Left ventricle myocardium inferior (tissue), 1 donor: ENCODE measurements at regions of chr11 and their contacts with region 1.

Region 1: GRCh38 chr11:125170510-125171031 is 6.0 kb downstream of the PKNOX2 start:
- DNase-seq: peak; percentile 80
- H3K4me3 ChIP-seq: peak overlapping the region; percentile 42
- H3K27ac ChIP-seq: peak overlapping the region; percentile 87
- H3K4me1 ChIP-seq: peaks cover 62% of the 10 kb centered on the region
- H3K27me3 ChIP-seq: peaks cover 35% of the 10 kb centered on the region
- CTCF ChIP-seq: no peak

Region 2: DNA sequence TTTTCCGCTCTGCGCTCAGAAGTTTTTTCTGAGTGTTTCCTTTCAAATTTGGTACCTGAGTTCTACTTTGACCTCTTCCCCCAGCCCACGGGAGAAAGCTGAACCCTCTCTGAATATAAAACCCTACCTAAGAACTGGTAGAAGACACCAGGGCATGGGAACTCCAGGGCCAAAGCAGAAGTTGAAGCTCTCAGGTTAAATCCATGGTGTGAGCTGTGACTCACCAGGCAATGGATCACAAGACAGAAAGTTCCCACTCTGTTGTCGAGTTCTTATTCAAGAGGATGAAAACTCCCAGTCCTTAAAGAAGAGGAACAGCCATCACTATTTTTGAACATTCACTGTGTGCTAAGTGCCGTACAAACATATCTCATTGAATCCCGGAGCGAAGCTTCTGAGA is 68.1 kb before region 1 on chr11:
- intact Hi-C with region 1: no loop called
- DNase-seq: no peak
- H3K4me3 ChIP-seq: no peak overlapping the region
- H3K27ac ChIP-seq: no peak overlapping the region
- H3K4me1 ChIP-seq: no peaks in the 10 kb centered on the region
- H3K27me3 ChIP-seq: no peaks in the 10 kb centered on the region
- CTCF ChIP-seq: no peak

Region 3: DNA sequence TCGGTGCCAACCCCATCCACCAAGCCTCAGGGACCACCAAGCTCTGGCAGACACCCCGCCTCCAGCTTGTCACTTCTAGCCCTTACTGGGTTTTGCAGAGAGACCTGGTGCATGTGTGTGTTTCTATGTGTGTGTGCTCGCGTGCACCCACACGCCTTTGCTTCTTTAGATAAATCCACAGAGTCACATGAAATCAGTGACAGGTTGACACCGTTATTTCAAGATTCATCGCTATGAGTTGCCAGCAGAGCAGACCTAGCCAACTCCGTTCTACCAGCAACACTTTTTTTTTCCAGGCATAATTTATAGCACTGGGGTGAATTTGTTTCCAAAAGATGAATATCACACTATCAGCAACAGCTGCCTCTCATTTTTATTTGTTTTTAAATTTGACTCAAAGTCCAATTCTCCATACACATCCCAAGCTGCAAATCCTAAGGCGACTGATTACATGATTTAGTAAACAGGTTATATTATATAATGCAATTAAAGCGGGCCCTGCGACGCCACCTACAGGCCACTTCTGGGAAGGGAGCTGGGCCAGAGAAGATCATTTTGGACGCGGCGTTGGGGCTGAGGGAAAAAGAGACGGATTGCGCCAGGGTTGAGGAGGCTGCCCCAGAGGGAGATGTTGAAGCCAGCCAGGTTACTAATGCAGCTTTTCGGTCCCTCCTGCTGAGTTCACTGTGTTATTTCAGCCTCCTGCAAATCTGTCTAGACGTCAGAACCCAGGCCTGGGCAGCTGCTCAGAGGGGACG is 175.0 kb after region 1 on chr11:
- intact Hi-C with region 1: loop called (anchors 10 kb)
- DNase-seq: peak; percentile 83
- H3K4me3 ChIP-seq: no peak overlapping the region
- H3K27ac ChIP-seq: peak overlapping the region; percentile 62
- H3K4me1 ChIP-seq: peaks cover 39% of the 10 kb centered on the region
- H3K27me3 ChIP-seq: no peaks in the 10 kb centered on the region
- CTCF ChIP-seq: peak; percentile 88

Region 4: DNA sequence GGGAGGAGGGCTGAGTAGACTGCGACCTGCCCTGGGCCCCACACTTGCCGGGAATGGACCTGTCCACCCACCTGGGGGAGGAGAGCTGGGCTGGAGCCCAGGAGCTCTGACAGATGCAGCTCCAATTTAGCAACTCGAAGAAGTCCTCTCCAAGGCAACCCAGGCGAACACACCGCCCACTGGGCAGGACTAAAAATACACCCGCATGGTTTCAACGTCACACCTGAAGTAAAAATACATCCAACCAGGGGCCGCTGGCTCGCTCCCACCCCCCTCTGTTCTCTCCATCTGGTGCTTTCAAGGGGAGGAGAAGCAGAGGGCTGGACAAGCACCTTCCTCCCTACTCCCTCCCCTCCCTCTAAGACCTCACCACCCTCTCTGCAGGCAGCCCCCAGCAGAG is 205.5 kb after region 1 on chr11:
- intact Hi-C with region 1: no loop called
- DNase-seq: peak; percentile 78
- H3K4me3 ChIP-seq: no peak overlapping the region
- H3K27ac ChIP-seq: peak overlapping the region; percentile 74
- H3K4me1 ChIP-seq: peaks cover 59% of the 10 kb centered on the region
- H3K27me3 ChIP-seq: no peaks in the 10 kb centered on the region
- CTCF ChIP-seq: no peak

Region 5: DNA sequence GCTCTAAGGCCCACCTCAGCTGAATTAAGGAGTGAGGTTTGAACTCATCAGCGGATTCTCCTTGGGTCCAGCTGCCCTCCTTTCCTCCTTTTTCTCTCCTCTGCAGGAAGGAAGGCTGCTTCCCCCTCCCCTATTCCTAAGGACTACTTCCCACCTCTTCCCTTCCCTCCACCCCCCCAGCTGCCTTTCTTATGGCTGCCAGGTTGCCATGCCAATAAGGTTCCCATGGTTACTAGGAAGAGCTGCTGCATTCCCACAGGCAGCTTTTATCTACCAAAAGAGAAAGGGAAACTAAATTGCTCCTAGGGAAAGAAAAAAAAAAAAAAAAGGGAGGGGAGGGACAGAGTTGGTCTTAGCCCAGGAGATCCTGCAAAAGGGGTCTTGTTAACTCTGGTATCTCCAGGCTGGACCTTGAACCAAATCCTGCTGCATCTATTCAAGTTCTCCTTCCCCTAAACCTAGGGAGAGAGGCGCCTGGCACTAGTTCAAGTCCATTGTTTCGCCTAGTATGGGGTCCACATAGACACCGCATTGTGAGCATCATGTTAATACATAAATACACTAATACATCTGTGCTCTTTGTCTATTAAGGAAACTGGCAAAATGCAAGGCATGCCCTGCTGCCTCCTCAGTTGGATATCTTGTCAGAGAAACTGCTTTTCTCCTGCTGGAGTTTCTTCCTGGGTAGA is 346.7 kb after region 1 on chr11:
- intact Hi-C with region 1: no loop called
- DNase-seq: no peak
- H3K4me3 ChIP-seq: peak overlapping the region; percentile 39
- H3K27ac ChIP-seq: no peak overlapping the region
- H3K4me1 ChIP-seq: no peaks in the 10 kb centered on the region
- H3K27me3 ChIP-seq: no peaks in the 10 kb centered on the region
- CTCF ChIP-seq: no peak